Activated T-helper 2 cell treated with anti-CD3 and anti-CD28 coated beads, Interferon-gamma antibody, Interleukin-2, Interleukin-4, amounts not matched to agents 10 μg/mL and 5 μg/mL and 100 μg/mL, durations not matched to agents 14 hours and 24 hours and 36 hours (primary cell): ENCODE measurements at regions of chr9 and their contacts with region 1.

Region 1: GRCh38 chr9:33290247-33291030 is at the start of gene NFX1:
- DNase-seq: peak; percentile 98
- H3K4me3 Mint-ChIP-seq: peak within 1 kb of the TSS; percentile 96
- H3K27ac Mint-ChIP-seq: peak within 1 kb of the TSS; percentile 100
- H3K4me1 Mint-ChIP-seq: peaks cover 45% of the 10 kb centered on the region
- H3K27me3 Mint-ChIP-seq: peaks cover 2% of the 10 kb centered on the region
- total RNA-seq, gene NFX1: 36.9 and 37.2 TPM in 2 replicates

Region 2: GRCh38 chr9:32672461-32672860 is 618.0 kb before region 1 on chr9:
- intact Hi-C with region 1: no loop called
- DNase-seq: no peak
- H3K4me3 Mint-ChIP-seq: no peak overlapping the region
- H3K27ac Mint-ChIP-seq: no peak overlapping the region
- H3K4me1 Mint-ChIP-seq: no peaks in the 10 kb centered on the region
- H3K27me3 Mint-ChIP-seq: no peaks in the 10 kb centered on the region

Region 3: GRCh38 chr9:33076358-33077004 is 214.0 kb before region 1 on chr9 and contains the start of gene SMU1:
- intact Hi-C with region 1: loop called (anchors 1 kb)
- DNase-seq: peak; percentile 96
- H3K4me3 Mint-ChIP-seq: peak within 1 kb of the TSS; percentile 99
- H3K27ac Mint-ChIP-seq: peak within 1 kb of the TSS; percentile 99
- H3K4me1 Mint-ChIP-seq: peaks cover 28% of the 10 kb centered on the region
- H3K27me3 Mint-ChIP-seq: no peaks in the 10 kb centered on the region
- total RNA-seq, gene SMU1: 27.6 and 28.3 TPM in 2 replicates

Region 4: GRCh38 chr9:33306037-33306436 is 15.6 kb after region 1 on chr9:
- intact Hi-C with region 1: loop called (anchors 1 kb)
- DNase-seq: no peak
- H3K4me3 Mint-ChIP-seq: no peak overlapping the region
- H3K27ac Mint-ChIP-seq: no peak overlapping the region
- H3K4me1 Mint-ChIP-seq: peaks cover 31% of the 10 kb centered on the region
- H3K27me3 Mint-ChIP-seq: no peaks in the 10 kb centered on the region

Region 5: GRCh38 chr9:33364127-33364526 is 73.7 kb after region 1 on chr9:
- intact Hi-C with region 1: no loop called
- DNase-seq: no peak
- H3K4me3 Mint-ChIP-seq: no peak overlapping the region
- H3K27ac Mint-ChIP-seq: no peak overlapping the region
- H3K4me1 Mint-ChIP-seq: no peaks in the 10 kb centered on the region
- H3K27me3 Mint-ChIP-seq: no peaks in the 10 kb centered on the region

Region 6: GRCh38 chr9:33374634-33375213 is 84.3 kb after region 1 on chr9:
- intact Hi-C with region 1: loop called (anchors 10 kb)
- DNase-seq: peak; percentile 57
- H3K4me3 Mint-ChIP-seq: no peak overlapping the region
- H3K27ac Mint-ChIP-seq: peak overlapping the region; percentile 39
- H3K4me1 Mint-ChIP-seq: peaks cover 10% of the 10 kb centered on the region
- H3K27me3 Mint-ChIP-seq: no peaks in the 10 kb centered on the region

Region 7: DNA sequence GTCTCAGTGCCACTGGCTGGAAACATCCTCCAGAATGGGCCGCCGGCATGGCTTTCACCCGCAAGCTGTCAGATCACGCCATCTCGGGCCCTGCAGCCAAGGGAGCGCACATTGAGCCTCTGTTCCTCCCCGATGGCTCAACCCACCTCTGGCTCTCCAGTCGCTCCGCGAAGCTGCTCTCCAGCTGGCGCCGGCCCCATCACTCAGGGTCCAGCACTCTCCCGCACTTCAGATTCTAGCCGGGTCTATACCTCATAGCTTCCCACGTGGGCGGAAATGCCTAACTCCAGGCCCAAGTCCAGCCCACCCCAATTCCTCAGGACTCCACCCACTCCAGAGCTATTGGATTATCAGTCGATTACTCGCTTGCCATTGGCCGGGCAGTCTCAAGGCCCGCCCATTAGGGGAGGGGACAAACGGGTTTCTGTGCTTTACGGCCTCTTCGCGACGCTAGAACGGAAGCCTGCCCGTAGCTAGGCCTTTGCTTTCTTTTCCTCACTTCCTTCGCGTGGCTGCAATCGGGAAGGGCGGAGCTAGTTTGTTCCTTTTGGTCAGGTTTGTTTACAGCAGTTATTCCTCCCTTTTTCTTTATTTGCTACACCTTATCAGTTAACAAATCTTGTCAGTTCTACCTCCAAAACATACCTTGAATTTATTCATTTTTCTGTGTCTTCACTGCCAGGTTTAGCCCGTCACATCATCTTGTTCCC is 183.4 kb after region 1 on chr9 and contains the start of gene NOL6:
- intact Hi-C with region 1: loop called (anchors 5 kb)
- DNase-seq: peak; percentile 98
- H3K4me3 Mint-ChIP-seq: peak within 1 kb of the TSS; percentile 98
- H3K27ac Mint-ChIP-seq: peak within 1 kb of the TSS; percentile 92
- H3K4me1 Mint-ChIP-seq: peaks cover 21% of the 10 kb centered on the region
- H3K27me3 Mint-ChIP-seq: no peaks in the 10 kb centered on the region
- total RNA-seq, gene NOL6: 61.9 and 65.3 TPM in 2 replicates

Region 8: GRCh38 chr9:33676746-33677505 is 386.5 kb after region 1 on chr9:
- intact Hi-C with region 1: no loop called
- DNase-seq: peak; percentile 11
- H3K4me3 Mint-ChIP-seq: peak overlapping the region; percentile 90
- H3K27ac Mint-ChIP-seq: no peak overlapping the region
- H3K4me1 Mint-ChIP-seq: peaks cover 18% of the 10 kb centered on the region
- H3K27me3 Mint-ChIP-seq: peaks cover 73% of the 10 kb centered on the region

Region 9: DNA sequence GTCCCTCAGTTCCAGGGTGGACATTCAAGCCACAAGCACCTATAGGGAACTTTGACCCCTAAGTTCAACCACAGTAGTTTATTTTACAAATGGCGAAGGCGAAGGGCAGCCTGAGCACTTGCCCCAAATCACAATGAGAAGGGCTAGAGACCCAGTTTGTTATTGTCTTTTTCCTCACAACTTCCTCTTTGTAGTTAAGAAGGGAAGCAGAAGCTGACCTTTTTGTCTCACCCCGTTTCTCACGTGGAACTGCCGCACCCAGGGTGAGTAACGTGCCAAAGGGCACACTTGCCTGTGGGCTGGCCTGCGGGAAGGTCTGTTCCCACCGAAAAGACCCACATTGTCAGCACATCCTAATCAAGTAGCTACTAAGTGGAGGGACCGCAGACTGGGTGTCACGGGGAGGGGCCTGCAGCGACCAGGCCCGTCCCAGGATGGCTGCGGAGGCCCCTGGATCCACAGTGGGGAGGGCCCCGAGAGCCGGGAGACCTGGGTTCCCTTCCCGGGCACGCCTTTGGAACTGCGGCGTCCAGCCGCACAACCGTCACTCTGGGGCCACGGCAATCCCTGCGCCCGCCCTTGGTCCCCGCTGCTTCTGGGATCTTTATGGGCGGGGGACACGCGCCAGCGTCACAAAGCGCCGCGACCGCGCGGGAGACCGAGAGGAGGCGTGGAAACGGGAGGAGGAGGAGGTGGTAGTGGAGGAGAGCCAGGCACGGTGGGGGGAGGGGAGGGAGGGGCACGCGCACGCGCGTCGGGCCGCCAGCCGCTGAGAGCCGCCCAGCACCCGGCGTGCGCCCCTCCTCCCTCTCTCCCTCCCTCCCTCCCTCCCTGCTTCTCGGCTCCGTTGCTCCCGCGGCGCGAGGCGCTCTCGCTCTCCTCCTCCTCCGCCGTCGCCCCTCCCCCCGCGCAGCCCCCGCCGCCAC is 526.2 kb after region 1 on chr9 and contains the start of gene UBE2R2:
- intact Hi-C with region 1: no loop called
- DNase-seq: peak; percentile 91
- H3K4me3 Mint-ChIP-seq: peak within 1 kb of the TSS; percentile 82
- H3K27ac Mint-ChIP-seq: peak within 1 kb of the TSS; percentile 89
- H3K4me1 Mint-ChIP-seq: peaks cover 38% of the 10 kb centered on the region
- H3K27me3 Mint-ChIP-seq: peaks cover 2% of the 10 kb centered on the region
- total RNA-seq, gene UBE2R2: 43.1 and 44.1 TPM in 2 replicates